Head of caudate nucleus (tissue), 42 donors: ENCODE measurements at regions of chr2 and their contacts with region 1.

Region 1: GRCh38 chr2:226791487-226792081 is 8.0 kb downstream of the IRS1 start:
- DNase-seq: peak; percentile 78 to 98 (median 95)

Region 2: GRCh38 chr2:226030788-226031646 is 760.6 kb before region 1 on chr2:
- intact Hi-C with region 1: loop called (anchors 10 kb)
- DNase-seq: peak; percentile 43 to 84 (median 70)

Region 3: GRCh38 chr2:226215902-226216503 is 575.6 kb before region 1 on chr2:
- intact Hi-C with region 1: loop called (anchors 10 kb)
- DNase-seq: peak; percentile 4 to 86 (median 54)